Cardiac septum (tissue), 1 donor: ENCODE measurements at regions of chr10 and their contacts with region 1.

Region 1: DNA sequence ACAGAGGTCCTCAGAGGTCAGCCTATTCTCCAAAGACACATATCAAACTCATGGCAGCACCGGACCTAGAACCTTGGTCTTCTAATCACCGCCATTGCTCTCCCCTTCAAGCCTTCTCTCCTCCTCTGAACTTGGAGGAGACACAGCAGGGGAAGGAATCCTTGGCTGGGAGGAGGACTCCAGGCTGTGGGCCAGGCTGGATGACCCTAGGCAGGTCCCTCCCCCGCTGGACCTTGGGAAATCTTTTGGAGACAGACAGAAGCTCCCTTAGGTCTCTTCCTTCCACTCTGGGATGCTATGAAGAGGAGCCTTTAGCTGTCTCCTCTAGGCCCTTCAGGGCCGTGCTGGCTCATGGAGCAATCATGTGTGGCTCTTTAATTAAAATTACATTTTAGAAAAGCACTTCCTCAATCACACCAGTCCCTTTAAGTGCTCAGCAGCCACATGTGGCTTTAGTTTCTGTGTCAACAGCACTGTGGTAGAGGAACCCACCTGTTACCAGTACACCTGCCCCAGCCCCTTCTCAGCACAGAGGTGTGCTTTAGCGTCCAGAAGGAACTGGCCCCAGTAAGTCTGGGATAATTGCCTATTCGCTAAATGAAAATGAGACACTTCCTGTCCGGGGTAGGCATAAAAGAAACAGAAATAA is 238.2 kb downstream of the CELF2 start:
- DNase-seq: no peak

Region 2: DNA sequence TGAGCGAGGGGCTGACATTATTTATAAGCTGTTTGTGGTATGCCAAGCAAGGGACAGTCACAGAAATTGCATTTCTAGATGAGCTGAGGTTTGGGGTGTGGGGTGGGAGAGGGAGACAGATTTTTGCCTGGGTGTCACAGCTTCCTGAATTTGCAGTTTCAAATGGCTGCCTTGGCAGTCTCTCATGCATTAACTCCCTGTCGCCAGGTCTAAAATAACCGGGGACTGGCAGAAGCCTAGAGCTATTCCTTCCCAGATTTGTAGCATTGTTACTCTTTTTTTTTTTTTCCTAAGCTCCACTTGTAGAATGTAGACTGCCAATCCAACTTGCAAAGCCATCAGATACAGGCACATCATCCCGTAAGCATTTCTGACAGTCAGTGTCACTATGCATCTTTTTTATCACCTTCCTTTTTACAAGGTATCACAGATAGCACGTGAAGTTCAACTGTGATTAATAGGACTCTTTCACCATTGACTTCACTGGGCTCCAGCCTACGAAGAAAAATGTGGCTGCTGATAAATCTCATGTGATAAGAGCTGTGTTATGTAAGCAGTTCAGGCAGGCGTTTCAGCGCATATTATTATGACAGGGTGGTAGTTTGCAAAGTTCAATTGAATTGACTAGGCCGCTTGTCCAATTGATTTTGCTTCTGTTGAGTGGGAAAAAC is 368.9 kb before region 1 on chr10:
- intact Hi-C with region 1: loop called (anchors 10 kb)
- DNase-seq: no peak

Region 3: GRCh38 chr10:11024596-11024995 is 231.3 kb before region 1 on chr10:
- intact Hi-C with region 1: loop called (anchors 5 kb)
- DNase-seq: no peak

Region 4: GRCh38 chr10:11165591-11166543 is 90.1 kb before region 1 on chr10:
- intact Hi-C with region 1: loop called (anchors 5 kb)
- DNase-seq: peak; percentile 86

Region 5: DNA sequence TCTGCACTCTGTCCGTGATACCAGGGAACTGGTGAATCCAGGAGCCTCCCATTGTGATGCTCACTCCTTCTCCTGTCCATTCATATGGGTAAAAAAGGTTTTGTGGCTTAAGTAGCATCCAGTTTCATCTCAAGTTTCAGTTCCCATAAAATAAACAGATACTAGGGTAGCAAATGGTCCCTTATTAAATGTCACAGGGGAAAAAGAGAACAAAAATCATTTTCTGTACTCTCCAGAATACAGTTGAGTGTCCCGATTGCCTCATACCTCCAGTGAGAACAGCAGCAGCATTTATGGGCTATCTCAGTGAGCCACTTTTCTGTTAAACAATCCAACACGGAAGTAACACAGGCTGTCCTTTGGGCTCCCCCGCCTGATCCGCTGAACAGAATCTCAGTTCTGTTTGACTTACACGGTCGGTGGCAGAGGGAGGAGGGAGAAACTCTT is 58.6 kb before region 1 on chr10:
- intact Hi-C with region 1: loop called (anchors 5 kb)
- DNase-seq: no peak

Region 6: DNA sequence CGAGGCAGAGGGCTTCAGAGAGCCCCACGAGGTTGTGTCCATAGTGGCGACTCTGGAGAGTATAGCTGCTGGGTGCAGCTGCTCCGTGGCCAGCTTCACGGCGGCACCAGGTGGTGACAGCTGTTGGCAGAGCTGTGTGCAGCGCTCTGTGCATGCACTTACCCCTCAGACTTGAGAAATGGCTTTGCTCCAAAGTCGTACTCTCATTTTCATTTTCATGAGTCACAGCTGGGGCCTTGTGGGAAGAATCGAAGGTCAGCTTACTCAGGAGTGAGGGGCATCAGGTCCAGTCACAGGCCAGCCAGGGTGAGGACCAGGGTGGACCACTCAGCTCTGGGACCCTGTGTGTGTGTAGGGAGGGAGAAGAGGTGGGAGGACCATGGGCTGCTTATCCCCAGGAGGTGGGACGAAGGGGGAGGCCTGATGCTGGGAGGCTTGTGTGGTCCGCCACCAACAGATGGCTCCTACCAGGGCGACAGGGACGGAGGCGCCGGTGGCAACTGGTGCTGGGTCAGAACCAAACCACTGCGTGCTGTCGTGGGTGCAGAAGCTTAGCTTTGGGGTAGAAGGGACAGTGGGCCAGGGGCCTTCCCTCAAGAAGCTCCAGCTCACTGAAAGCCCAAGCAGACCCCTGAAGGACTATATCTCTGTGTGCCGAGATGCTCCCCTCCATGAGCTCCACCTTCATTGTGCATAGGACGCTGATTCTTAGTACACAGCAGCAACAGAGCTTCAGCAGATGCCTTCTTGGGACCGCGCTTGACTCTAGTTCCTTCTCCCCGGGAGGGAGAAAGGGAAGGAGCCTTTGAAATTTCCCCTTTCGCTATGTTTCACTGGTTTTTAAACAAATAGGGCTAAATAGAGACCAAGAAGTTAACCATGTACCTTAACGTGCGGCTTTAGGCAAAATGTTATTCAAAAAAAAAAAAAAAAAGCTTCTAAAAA is 13.2 kb before region 1 on chr10:
- intact Hi-C with region 1: no loop called
- DNase-seq: peak; percentile 84